Left ventricle myocardium inferior (tissue), 1 donor: ENCODE measurements at regions of chr18 and their contacts with region 1.

Region 1: GRCh38 chr18:26383454-26384270 is 157.4 kb downstream of the TAF4B start:
- DNase-seq: no peak
- H3K4me3 ChIP-seq: no peak overlapping the region
- H3K27ac ChIP-seq: no peak overlapping the region
- H3K4me1 ChIP-seq: peaks cover 10% of the 10 kb centered on the region
- H3K27me3 ChIP-seq: no peaks in the 10 kb centered on the region
- CTCF ChIP-seq: peak; percentile 89

Region 2: DNA sequence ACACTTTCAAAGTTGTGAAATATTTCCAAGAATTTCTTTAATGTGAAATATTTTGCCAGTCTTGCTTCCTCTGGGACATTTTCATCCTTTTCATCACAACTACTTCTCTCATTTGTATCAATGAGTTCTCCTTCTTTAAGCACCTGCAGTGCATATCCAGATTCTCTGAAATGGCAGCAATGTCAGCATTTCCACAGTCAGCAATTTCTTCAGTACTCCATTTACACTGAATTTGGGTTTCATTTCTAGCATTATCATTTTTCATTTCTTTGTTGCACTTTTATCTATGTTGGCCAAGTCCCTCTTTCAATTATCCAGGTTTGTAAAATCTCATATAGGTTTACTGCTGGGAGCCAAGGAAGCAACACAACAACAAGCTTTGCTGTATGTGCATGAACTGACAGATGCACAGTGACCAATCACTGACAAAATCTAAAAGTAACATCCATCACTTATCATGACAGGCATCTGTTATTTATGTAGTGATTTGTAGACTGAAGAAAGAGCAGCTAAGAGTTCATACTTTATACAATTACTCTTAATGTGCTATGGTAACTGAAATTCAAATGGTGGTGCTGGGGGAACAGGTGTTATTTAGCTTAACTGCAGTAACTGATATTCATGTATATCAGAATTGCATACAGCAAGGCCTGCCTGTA is 337.1 kb before region 1 on chr18:
- intact Hi-C with region 1: no loop called
- DNase-seq: no peak
- H3K4me3 ChIP-seq: no peak overlapping the region
- H3K27ac ChIP-seq: no peak overlapping the region
- H3K4me1 ChIP-seq: peaks cover 35% of the 10 kb centered on the region
- H3K27me3 ChIP-seq: no peaks in the 10 kb centered on the region
- CTCF ChIP-seq: no peak

Region 3: DNA sequence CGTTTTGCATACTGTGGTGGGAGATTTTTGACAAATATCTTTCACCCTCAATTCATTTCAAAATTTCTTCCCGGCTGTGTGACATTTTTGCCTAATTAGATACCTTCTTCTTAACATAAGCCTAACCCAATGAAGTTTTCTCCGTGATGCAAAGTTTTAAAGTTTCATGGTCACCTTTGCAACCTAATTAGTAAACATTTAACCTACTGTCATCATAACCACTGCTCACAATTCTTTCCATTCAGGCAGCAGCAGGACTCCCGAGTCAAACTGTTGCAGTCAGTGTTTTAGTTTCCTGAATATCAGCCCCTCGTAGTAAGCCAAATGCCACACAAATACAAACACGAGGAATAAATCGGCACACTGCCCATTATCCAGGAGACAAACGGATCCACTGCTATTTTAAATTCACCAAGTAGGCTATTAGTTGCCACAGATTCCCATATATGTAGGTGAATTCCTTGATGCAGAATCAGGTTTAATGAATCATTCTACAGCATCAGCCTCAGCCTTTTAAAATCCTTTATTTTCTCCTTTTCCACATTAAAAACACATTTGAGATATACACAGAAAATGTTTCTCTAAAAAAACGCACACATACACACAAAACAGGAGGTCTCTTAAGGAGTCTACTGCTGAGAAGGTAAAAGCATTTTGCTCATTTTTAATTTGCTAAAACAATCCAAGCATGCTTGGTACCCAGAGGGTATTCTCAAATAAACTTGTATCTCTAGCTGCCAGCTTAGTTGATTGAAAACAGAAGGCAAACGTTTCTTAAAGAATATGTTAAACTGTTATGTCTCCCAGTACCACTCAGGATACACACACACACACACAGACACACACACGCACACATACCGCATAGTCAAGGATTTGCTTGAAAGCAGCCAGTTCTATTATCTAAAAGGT is 271.2 kb after region 1 on chr18:
- intact Hi-C with region 1: loop called (anchors 5 kb)
- DNase-seq: no peak
- H3K4me3 ChIP-seq: peak overlapping the region; percentile 78
- H3K27ac ChIP-seq: peak overlapping the region; percentile 92
- H3K4me1 ChIP-seq: peaks cover 49% of the 10 kb centered on the region
- H3K27me3 ChIP-seq: peaks cover 11% of the 10 kb centered on the region
- CTCF ChIP-seq: no peak